Calu3 (cell line): ENCODE measurements at regions of chr7 and their contacts with region 1.

Region 1: DNA sequence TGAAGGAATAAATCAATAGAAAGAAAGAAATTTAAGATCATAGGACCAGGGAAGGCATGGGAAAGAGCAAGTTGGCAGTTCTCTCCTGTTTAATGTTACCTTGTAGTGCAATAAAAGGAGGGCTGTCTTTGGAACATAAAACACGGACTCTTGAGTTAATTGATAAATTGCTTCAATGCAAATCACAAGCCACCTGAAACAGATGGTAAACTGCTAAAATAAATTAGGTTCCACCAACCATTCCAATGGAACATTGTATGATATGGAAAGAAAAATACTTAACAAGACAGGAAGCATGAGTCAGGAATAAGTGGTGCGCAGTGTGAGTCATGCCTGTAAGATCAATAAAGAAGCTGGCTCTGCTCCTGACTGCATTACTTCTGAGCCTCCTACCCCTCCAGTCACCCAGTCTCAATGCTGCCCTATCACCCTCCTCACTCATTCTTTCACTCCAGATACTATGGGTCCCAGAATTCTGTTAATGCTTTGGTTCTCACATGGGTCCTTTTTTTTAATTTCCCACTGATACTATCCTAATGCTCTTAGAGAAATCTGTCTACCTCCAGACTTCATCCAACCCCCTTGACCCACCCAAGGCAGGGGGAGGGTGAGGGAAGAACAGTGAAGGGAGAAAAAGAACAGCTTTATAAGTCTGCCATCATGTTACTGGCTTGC is 78.9 kb downstream of the LRRC17 start:
- DNase-seq: peak; percentile 65
- H3K4me3 Mint-ChIP-seq: no peak overlapping the region
- H3K27ac Mint-ChIP-seq: no peak overlapping the region
- H3K4me1 Mint-ChIP-seq: peaks cover 19% of the 10 kb centered on the region
- H3K27me3 Mint-ChIP-seq: no peaks in the 10 kb centered on the region
- CTCF ChIP-seq: no peak

Region 2: DNA sequence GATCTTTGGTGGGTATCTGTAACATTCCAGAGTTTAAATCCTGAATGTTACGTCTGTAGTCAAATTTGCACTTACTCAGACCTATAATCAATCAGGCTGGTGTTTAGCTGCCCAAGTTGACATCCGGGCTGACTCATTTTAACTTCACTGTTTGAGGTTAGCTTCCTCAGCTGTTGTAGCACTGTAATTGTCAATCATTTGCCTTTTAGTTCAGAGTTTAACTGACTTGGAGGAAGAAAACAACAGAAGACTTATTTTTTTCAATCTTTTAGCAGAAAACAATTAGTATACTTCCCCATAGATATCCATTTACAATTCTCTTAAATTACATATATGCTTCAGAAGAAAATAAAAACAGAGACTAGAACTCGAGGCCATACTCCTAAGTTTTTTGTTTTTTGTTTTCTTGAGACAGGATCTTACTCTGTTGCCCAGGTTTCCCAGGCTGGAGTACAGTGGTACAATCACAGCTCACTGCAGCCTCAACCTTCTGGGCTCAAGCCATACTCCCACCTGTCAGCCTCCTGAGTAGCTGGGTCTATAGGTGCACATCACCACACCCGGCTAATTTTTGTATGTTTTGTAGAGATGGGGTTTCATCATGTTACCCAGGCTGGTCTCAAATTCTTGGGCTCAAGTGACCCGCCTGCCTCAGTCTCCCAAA is 117.4 kb before region 1 on chr7:
- CTCF ChIA-PET with region 1: no interaction called
- intact Hi-C with region 1: loop called (anchors 2 kb)
- DNase-seq: peak; percentile 50
- H3K4me3 Mint-ChIP-seq: no peak overlapping the region
- H3K27ac Mint-ChIP-seq: peak overlapping the region; percentile 98
- H3K4me1 Mint-ChIP-seq: peaks cover 64% of the 10 kb centered on the region
- H3K27me3 Mint-ChIP-seq: no peaks in the 10 kb centered on the region
- CTCF ChIP-seq: no peak

Region 3: DNA sequence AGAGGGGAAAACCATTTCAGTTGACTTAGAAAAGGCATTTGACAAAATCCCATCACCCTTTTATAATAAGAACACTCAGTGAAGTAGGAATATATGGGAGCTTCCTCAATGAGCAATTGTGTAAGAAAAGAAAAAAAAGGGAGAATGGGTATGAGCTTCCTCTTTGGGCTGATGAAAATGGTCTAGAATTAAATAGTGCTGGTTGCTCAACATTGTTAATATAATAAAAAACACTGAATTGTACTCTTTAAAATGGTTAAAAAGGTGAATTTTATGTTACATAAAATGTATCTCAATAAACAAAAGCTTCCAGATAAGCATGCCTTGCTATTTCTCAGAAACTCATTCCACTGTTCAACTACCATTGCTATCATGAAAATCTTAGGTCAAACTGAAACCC is 38.3 kb before region 1 on chr7:
- CTCF ChIA-PET with region 1: no interaction called
- intact Hi-C with region 1: no loop called
- DNase-seq: no peak
- H3K4me3 Mint-ChIP-seq: no peak overlapping the region
- H3K27ac Mint-ChIP-seq: no peak overlapping the region
- H3K4me1 Mint-ChIP-seq: no peaks in the 10 kb centered on the region
- H3K27me3 Mint-ChIP-seq: no peaks in the 10 kb centered on the region
- CTCF ChIP-seq: no peak

Region 4: DNA sequence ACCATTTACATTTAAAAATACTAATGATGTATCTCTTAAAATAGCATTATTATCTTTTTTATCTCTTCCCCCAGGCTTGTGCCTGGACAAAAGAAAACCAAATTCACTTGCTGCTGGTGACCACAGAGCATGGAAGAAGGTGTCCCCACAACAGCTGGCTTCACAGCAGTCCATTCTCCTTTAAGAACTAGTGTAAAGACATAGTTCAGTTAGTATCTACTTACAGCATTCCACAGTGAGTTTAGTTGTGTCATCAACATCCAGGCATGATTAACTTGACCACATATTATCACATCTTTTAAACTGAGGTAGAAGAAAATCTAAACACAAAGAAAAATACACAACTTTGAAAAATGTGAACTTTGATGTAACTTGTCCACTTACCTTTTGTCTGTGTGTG is 23.9 kb before region 1 on chr7:
- CTCF ChIA-PET with region 1: no interaction called
- intact Hi-C with region 1: no loop called
- DNase-seq: no peak
- H3K4me3 Mint-ChIP-seq: no peak overlapping the region
- H3K27ac Mint-ChIP-seq: no peak overlapping the region
- H3K4me1 Mint-ChIP-seq: no peaks in the 10 kb centered on the region
- H3K27me3 Mint-ChIP-seq: no peaks in the 10 kb centered on the region
- CTCF ChIP-seq: no peak

Region 5: DNA sequence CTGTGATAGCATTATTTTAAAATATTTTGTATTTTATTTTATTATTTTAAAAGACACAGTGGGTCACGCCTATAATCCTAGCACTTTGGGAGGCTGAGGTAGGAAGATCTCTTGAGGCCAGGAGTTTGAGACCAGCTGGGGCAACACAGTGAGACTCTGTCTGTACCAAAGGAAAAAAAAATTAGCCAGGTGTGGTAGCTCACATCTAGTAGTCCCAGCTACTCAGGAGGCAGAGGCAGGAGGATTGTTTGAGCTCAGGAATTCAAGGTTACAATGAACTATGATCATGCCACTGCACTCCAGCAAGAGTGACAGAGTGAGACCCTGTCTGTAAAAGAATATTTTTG is 45.8 kb after region 1 on chr7:
- CTCF ChIA-PET with region 1: no interaction called
- intact Hi-C with region 1: loop called (anchors 5 kb)
- DNase-seq: no peak
- H3K4me3 Mint-ChIP-seq: no peak overlapping the region
- H3K27ac Mint-ChIP-seq: peak overlapping the region; percentile 42
- H3K4me1 Mint-ChIP-seq: peaks cover 11% of the 10 kb centered on the region
- H3K27me3 Mint-ChIP-seq: no peaks in the 10 kb centered on the region
- CTCF ChIP-seq: no peak

Region 6: DNA sequence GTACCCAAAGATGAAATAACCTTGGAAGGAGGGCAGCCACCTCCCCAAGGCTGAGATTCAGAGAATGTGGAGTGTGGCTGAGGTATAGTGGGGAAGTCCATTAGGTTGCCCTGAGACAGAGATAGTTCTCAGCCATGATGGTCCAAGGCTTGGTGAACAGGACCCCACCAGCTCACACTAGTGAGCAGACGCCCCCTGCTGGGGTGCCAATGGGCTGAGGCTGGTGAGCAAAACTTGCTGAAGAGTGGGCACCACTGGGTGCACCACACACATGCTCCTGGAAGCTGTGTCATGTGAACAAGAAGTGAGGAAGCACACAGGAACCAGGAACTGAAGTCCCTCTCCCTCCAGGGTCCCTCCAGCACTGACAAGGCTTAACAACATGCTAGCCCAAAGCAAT is 74.0 kb after region 1 on chr7:
- CTCF ChIA-PET with region 1: interaction called, 6 read pairs
- intact Hi-C with region 1: loop called (anchors 1 kb)
- DNase-seq: peak; percentile 67
- H3K4me3 Mint-ChIP-seq: no peak overlapping the region
- H3K27ac Mint-ChIP-seq: no peak overlapping the region
- H3K4me1 Mint-ChIP-seq: peaks cover 8% of the 10 kb centered on the region
- H3K27me3 Mint-ChIP-seq: no peaks in the 10 kb centered on the region
- CTCF ChIP-seq: peak; percentile 28